Activated CD4-positive, alpha-beta T cell treated with anti-CD3 and anti-CD28 coated beads for 36 hours (primary cell): ENCODE measurements at regions of chr1 and their contacts with region 1.

Region 1: GRCh38 chr1:26839779-26840178 is 13.3 kb downstream of the ZDHHC18 start:
- DNase-seq: no peak
- ATAC-seq: no peak
- H3K4me3 Mint-ChIP-seq: no peak overlapping the region
- H3K27ac Mint-ChIP-seq: no peak overlapping the region
- H3K4me1 Mint-ChIP-seq: peaks cover 24% of the 10 kb centered on the region
- H3K27me3 Mint-ChIP-seq: no peaks in the 10 kb centered on the region

Region 2: GRCh38 chr1:26705788-26706311 is 133.9 kb before region 1 on chr1:
- CTCF ChIA-PET with region 1: no interaction called
- POLR2A ChIA-PET with region 1: interaction called, 14 read pairs
- intact Hi-C with region 1: no loop called
- DNase-seq: no peak
- ATAC-seq: no peak
- H3K4me3 Mint-ChIP-seq: peak overlapping the region; percentile 4
- H3K27ac Mint-ChIP-seq: peak overlapping the region; percentile 55
- H3K4me1 Mint-ChIP-seq: peaks cover 44% of the 10 kb centered on the region
- H3K27me3 Mint-ChIP-seq: no peaks in the 10 kb centered on the region